ENCODE measurements at regions of chr15 and their contacts with region 1.

Region 1: GRCh38 chr15:66386204-66387123 is at the start of gene MAP2K1:
- DNase-seq: peak; percentile 98
- ATAC-seq: peak; percentile 87
- H3K4me3 Mint-ChIP-seq: peak within 1 kb of the TSS; percentile 95
- H3K27ac Mint-ChIP-seq: peak within 1 kb of the TSS; percentile 100
- H3K4me1 Mint-ChIP-seq: peaks cover 40% of the 10 kb centered on the region
- H3K27me3 Mint-ChIP-seq: no peaks in the 10 kb centered on the region
- CTCF ChIP-seq: peak; percentile 69
- total RNA-seq, gene MAP2K1: 117 to 118 TPM

Region 2: GRCh38 chr15:66356345-66357236 is 29.9 kb before region 1 on chr15 and contains the start of gene TIPIN:
- CTCF ChIA-PET with region 1: interaction called, 5 read pairs
- POLR2A ChIA-PET with region 1: interaction called, 17 read pairs
- intact Hi-C with region 1: no loop called
- DNase-seq: peak; percentile 99
- ATAC-seq: peak; percentile 97
- H3K4me3 Mint-ChIP-seq: peak within 1 kb of the TSS; percentile 94
- H3K27ac Mint-ChIP-seq: peak within 1 kb of the TSS; percentile 99
- H3K4me1 Mint-ChIP-seq: peaks cover 24% of the 10 kb centered on the region
- H3K27me3 Mint-ChIP-seq: no peaks in the 10 kb centered on the region
- CTCF ChIP-seq: no peak
- total RNA-seq, gene TIPIN: 49.8 to 50.1 TPM

Region 3: GRCh38 chr15:66619151-66619903 is 232.9 kb after region 1 on chr15:
- CTCF ChIA-PET with region 1: no interaction called
- POLR2A ChIA-PET with region 1: no interaction called
- intact Hi-C with region 1: no loop called
- DNase-seq: peak; percentile 68
- ATAC-seq: peak; percentile 87
- H3K4me3 Mint-ChIP-seq: no peak overlapping the region
- H3K27ac Mint-ChIP-seq: no peak overlapping the region
- H3K4me1 Mint-ChIP-seq: no peaks in the 10 kb centered on the region
- H3K27me3 Mint-ChIP-seq: peaks cover 17% of the 10 kb centered on the region
- CTCF ChIP-seq: peak; percentile 91

Measured in activated CD8-positive, alpha-beta T cell treated with anti-CD3 and anti-CD28 coated beads for 36 hours (primary cell).